ENCODE measurements at regions of chr18 and their contacts with region 1.

Region 1: DNA sequence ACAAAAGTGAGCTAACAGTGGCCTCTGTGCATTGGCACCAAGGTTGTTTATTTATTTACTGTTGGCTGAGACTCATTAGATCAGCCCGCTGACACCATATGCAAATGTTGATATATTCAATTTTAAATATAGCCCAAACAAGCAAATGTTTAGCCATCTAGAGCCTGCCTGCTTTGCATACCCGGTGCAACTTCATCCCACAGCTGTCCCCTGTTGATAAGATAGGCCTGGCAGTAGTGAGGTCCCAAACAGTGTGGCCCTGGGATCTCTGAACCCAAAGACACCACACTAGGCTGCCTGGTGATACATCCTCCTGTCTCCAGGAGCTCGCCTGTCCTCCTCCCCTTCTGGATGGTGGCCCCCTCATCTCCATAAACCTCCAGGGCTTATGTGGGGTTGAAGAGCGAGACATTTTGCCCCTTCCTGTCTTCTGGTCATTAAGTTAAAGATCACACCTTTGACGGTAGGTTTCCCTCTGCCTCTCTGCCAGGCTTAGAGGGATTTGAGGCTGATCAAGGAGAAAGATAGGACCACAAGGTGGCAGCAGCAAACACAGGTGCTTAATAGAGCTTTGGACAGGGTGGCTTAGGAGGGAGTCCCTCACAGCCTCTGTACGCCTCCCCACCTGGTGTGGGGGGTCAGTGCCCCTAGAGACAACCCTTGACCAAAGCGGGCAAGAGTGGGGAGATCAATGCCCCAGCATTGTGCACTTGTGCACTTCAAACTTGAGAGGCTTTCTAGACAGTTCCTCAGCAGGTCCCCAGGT is 23.7 kb upstream of the MYO5B start:
- DNase-seq: no peak
- ATAC-seq: no peak
- H3K4me3 ChIP-seq: no peak overlapping the region
- H3K27ac ChIP-seq: no peak overlapping the region
- H3K4me1 ChIP-seq: no peaks in the 10 kb centered on the region
- H3K27me3 ChIP-seq: no peaks in the 10 kb centered on the region
- CTCF ChIP-seq: peak; percentile 20

Region 2: DNA sequence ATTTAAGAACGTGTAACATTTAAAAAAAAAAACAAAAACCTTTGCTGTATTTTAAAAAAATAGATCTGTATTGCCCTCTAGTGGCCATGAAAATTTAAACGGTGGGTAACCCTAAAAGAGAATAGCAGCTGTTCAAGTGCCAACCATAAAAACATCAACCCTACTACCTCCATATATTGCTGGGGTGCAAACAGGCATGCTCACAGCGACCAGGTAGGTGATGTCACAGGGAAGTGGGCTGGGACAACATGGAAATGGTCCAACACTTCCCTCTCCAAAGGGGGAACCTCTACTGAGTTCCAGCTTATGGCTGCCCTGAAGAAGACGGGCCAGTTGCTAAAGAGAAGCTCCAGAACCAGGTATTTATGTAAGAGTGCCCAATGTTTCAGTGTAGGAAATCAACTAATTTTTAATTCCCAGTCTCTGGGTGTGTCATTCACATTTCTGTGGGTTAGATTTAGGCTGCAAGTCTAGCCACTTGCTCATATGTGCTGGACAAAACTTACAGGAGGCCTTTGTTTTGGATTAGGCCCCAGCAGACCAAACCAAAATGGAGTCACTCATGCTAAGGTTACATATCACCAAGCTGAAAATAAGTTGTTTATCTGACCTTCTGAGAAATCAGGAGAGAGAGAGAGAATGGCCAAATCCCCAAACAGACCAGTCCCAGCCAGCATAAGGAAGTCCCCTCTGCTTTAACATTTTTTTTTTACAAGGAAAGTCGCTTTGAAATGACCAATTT is 210.8 kb after region 1 on chr18:
- intact Hi-C with region 1: loop called in 1 of 2 experiments (anchors 10 kb)
- DNase-seq: no peak
- ATAC-seq: peak in 2 of 4 donors; percentile 34 to 52
- H3K4me3 ChIP-seq: no peak overlapping the region
- H3K27ac ChIP-seq: no peak overlapping the region
- H3K4me1 ChIP-seq: no peaks in the 10 kb centered on the region
- H3K27me3 ChIP-seq: no peaks in the 10 kb centered on the region
- CTCF ChIP-seq: peak; percentile 51